Motor neuron (in vitro differentiated cells): ENCODE measurements at regions of chr4 and their contacts with region 1.

Region 1: DNA sequence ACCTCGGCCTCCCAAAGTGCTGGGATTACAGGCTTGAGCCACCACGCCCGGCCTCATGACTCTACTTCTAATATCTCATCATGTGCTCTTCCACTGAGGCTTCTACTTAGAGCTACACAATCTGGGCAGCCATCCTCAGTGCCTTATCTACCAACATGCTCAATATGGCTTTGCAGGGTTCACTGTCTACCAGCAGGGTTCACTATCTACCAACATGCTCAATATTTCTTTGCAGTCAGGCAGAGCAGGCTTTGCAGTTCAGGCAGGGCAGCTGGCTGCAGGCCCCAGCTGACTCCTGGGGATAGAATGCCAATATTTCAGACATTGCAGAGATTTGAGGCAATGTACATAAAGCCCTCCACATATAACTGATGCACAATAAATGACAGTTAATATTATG is 47.5 kb downstream of the PKD2 start:
- ATAC-seq: peak in 4 of 8 experiments; percentile 47 to 99 (median 84)
- H3K4me3 ChIP-seq: no peak overlapping the region
- H3K27ac ChIP-seq: no peak overlapping the region
- H3K4me1 ChIP-seq: no peaks in the 10 kb centered on the region

Region 2: GRCh38 chr4:88204882-88205281 is 150.0 kb after region 1 on chr4:
- in situ Hi-C with region 1: loop called in 1 of 9 experiments (anchors 10 kb)
- ATAC-seq: no peak
- H3K4me3 ChIP-seq: no peak overlapping the region
- H3K27ac ChIP-seq: no peak overlapping the region
- H3K4me1 ChIP-seq: no peaks in the 10 kb centered on the region